B cell (primary cell): ENCODE measurements at regions of chr6 and their contacts with region 1.

Region 1: GRCh38 chr6:24431045-24431451 is 28.3 kb downstream of the MRS2 start:
- DNase-seq: peak; percentile 65
- ATAC-seq: peak; percentile 58
- H3K4me3 ChIP-seq: no peak overlapping the region
- H3K4me3 Mint-ChIP-seq: no peak overlapping the region
- H3K27ac ChIP-seq: no peak overlapping the region
- H3K27ac Mint-ChIP-seq: no peak overlapping the region
- H3K4me1 ChIP-seq: no peaks in the 10 kb centered on the region
- H3K4me1 Mint-ChIP-seq: no peaks in the 10 kb centered on the region
- H3K27me3 ChIP-seq: no peaks in the 10 kb centered on the region
- H3K27me3 Mint-ChIP-seq: no peaks in the 10 kb centered on the region
- CTCF ChIP-seq: peak; percentile 90

Region 2: GRCh38 chr6:24440897-24441598 is 10.0 kb after region 1 on chr6:
- CTCF ChIA-PET with region 1: interaction called, 17 read pairs
- POLR2A ChIA-PET with region 1: no interaction called
- intact Hi-C with region 1: no loop called
- DNase-seq: no peak
- ATAC-seq: no peak
- H3K4me3 ChIP-seq: no peak overlapping the region
- H3K4me3 Mint-ChIP-seq: no peak overlapping the region
- H3K27ac ChIP-seq: no peak overlapping the region
- H3K27ac Mint-ChIP-seq: no peak overlapping the region
- H3K4me1 ChIP-seq: no peaks in the 10 kb centered on the region
- H3K4me1 Mint-ChIP-seq: no peaks in the 10 kb centered on the region
- H3K27me3 ChIP-seq: no peaks in the 10 kb centered on the region
- H3K27me3 Mint-ChIP-seq: no peaks in the 10 kb centered on the region
- CTCF ChIP-seq: no peak

Region 3: GRCh38 chr6:24460966-24461365 is 29.9 kb after region 1 on chr6:
- CTCF ChIA-PET with region 1: no interaction called
- POLR2A ChIA-PET with region 1: no interaction called
- intact Hi-C with region 1: no loop called
- DNase-seq: no peak
- ATAC-seq: no peak
- H3K4me3 ChIP-seq: no peak overlapping the region
- H3K4me3 Mint-ChIP-seq: no peak overlapping the region
- H3K27ac ChIP-seq: no peak overlapping the region
- H3K27ac Mint-ChIP-seq: no peak overlapping the region
- H3K4me1 ChIP-seq: no peaks in the 10 kb centered on the region
- H3K4me1 Mint-ChIP-seq: no peaks in the 10 kb centered on the region
- H3K27me3 ChIP-seq: no peaks in the 10 kb centered on the region
- H3K27me3 Mint-ChIP-seq: no peaks in the 10 kb centered on the region
- CTCF ChIP-seq: no peak